ENCODE measurements at regions of chr9 and their contacts with region 1.

Region 1: GRCh38 chr9:128383007-128383753 is 12.0 kb downstream of the URM1 start:
- DNase-seq: no peak

Region 2: DNA sequence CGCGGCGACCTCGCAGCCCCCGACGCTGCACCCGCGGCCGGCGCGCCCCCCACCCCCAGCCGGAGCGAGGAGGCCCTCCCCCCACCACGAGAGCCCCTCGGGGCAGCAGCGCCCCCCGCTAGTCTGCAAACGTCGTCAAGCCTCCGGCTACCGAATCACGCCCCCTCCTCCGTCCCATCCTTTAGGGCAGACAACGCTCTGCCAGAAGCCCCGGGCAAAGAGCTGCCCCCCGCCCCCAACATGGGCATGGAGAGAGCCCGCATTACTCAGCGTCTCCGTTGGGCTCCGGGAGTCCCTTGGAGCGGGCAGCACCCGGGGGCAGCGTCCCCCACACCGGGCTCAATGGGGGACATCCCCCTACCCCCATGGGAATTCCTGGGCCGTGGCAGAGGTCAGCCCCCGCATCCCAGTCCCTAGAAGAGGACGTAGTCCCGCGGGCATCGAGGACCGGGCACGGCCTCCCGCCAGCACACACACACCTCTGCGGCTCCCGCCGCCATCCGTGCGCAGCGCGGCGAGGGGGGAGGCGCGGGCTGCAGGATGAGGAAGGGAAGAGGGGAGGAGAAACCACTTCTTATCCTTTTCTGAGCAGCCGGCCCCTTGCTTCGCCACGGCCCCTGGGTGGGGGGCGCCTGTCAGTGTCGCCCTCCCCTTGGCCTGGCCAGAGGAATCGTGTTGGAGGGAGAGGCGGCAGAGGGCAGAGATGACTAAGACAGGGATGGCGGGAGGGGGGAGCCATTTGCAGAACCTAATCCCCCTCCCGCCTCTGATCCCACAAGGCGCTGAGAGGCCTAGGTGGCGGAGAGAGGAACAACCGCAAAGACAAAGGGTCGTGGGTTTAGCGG is 179.3 kb before region 1 on chr9:
- CTCF ChIA-PET with region 1: no interaction called
- POLR2A ChIA-PET with region 1: no interaction called
- DNase-seq: peak; percentile 59

Region 3: DNA sequence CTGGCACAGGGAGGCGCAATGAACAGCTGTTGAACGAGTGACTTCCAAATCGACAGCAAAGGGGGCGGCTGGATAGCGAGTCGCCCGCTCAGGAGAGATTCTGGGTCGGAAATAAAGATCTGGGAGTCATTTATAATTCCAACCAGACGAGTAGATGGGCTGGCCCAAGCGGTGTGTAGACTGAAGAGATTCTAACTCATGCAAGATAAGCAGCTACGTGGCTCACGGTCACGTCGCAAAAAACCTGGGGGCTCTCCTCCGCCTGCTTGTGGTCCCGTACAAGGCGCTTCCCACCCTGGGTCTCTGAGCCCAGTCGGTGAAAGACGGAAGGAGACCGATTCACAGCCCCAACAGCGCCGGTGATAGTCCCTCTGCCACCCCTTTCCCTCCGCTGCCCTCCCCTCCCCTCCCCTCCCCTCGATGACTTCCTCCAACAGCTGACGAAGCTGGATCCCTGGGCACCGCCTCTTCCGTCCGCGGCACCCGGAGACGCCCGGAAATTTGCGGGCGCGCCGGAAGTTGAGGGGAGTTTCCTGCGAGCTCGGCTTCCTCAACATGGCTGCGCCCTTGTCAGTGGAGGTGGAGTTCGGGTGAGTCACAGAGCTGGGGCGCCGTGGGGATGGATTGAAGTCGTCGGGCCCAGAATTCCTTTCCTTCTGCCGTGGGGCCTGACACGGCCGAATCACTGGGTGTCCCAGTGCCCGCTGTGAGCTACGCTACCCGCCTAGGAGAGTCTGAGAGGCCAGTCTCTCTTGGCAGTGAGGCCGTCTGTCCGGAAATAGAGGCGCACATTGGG is 12.2 kb before region 1 on chr9 and contains the start of gene URM1:
- CTCF ChIA-PET with region 1: no interaction called
- POLR2A ChIA-PET with region 1: interaction called, 16 read pairs
- DNase-seq: peak; percentile 98